Activated CD8-positive, alpha-beta memory T cell treated with anti-CD3 and anti-CD28 coated beads, Interleukin-2, amount 10 ng/mL, durations not matched to agents 7 days and 5 days (primary cell): ENCODE measurements at regions of chr2 and their contacts with region 1.

Region 1: GRCh38 chr2:231662028-231662810 is 46.1 kb upstream of the PTMA start:
- DNase-seq: peak; percentile 97
- ATAC-seq: peak; percentile 95
- H3K4me3 Mint-ChIP-seq: peak overlapping the region; percentile 69
- H3K27ac Mint-ChIP-seq: peak overlapping the region; percentile 94
- H3K4me1 Mint-ChIP-seq: peaks cover 15% of the 10 kb centered on the region
- H3K27me3 Mint-ChIP-seq: no peaks in the 10 kb centered on the region

Region 2: GRCh38 chr2:231706731-231707624 is 44.8 kb after region 1 on chr2:
- CTCF ChIA-PET with region 1: interaction called, 12 read pairs
- DNase-seq: peak; percentile 98
- ATAC-seq: peak; percentile 43
- H3K4me3 Mint-ChIP-seq: peak overlapping the region; percentile 93
- H3K27ac Mint-ChIP-seq: peak overlapping the region; percentile 99
- H3K4me1 Mint-ChIP-seq: peaks cover 19% of the 10 kb centered on the region
- H3K27me3 Mint-ChIP-seq: peaks cover 2% of the 10 kb centered on the region